Testis (tissue), 5 donors: ENCODE measurements at regions of chr10 and their contacts with region 1.

Region 1: DNA sequence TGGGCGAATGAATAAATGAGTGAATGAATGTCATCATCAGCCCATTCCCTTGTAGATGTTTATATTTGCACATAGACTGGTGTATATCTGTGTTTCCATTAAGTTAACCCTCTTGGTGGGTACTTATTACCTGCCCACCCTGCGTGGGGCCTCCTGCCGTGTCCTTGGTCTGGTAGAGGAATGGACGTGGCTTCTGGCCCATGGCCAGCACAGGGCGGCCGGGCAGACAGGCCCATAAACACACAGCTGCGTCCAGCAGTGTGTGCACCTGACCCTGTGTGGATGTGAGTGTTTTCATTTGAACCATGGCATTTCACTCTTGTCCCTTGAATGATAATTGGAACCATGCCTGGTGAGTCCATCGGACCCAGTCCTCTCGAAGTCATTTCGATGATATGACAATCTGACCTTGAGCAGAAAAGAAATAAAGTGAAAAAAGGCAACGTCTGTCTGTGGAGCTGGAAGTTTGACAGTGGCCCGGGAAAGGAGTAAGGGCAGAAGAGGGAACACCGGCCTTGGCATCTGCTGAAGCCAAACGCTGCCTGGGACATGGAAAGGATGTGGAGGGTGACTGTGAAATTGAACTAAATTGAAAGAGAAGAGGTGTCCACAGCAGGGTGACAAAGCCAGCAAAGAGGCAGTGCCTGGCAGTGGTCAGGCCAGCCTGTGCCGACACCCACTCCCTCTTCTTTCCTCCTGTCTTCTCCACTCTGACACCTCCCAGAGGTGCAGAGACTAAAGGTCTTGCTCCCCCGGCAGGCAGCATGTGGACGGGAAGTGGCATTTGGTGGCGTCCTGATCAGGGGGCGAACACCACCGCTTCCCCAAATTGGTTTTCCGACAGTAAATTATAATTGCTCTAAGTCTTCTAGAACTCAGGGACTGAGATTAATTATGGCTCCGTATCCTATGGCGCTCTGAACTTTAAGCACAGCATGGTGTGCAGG is 199.0 kb upstream of the ZMIZ1 start:
- DNase-seq: no peak
- H3K4me3 ChIP-seq: no peak overlapping the region
- H3K27ac ChIP-seq: no peak overlapping the region
- H3K4me1 ChIP-seq: peaks cover 6% of the 10 kb centered on the region
- H3K27me3 ChIP-seq: no peaks in the 10 kb centered on the region
- CTCF ChIP-seq: no peak
- POLR2A ChIP-seq: no peak

Region 2: GRCh38 chr10:78829565-78829964 is 40.2 kb before region 1 on chr10:
- intact Hi-C with region 1: loop called (anchors 10 kb)
- DNase-seq: no peak
- H3K4me3 ChIP-seq: no peak overlapping the region
- H3K27ac ChIP-seq: no peak overlapping the region
- H3K4me1 ChIP-seq: no peaks in the 10 kb centered on the region
- H3K27me3 ChIP-seq: no peaks in the 10 kb centered on the region
- CTCF ChIP-seq: no peak
- POLR2A ChIP-seq: no peak